Stomach (tissue), 19 donors: ENCODE measurements at regions of chr6 and their contacts with region 1.

Region 1: GRCh38 chr6:34680802-34681515 is 15.6 kb downstream of the ILRUN start:
- DNase-seq: no peak
- H3K4me3 ChIP-seq: no peak overlapping the region
- H3K27ac ChIP-seq: peak overlapping the region in 4 of 5 donors; percentile 31 to 55 (median 42)
- H3K4me1 ChIP-seq: peaks cover 5 to 40% (median 27%) of the 10 kb centered on the region in 4 donors
- H3K27me3 ChIP-seq: no peaks in the 10 kb centered on the region
- CTCF ChIP-seq: no peak
- EP300 ChIP-seq: no peak
- POLR2A ChIP-seq: no peak

Region 2: DNA sequence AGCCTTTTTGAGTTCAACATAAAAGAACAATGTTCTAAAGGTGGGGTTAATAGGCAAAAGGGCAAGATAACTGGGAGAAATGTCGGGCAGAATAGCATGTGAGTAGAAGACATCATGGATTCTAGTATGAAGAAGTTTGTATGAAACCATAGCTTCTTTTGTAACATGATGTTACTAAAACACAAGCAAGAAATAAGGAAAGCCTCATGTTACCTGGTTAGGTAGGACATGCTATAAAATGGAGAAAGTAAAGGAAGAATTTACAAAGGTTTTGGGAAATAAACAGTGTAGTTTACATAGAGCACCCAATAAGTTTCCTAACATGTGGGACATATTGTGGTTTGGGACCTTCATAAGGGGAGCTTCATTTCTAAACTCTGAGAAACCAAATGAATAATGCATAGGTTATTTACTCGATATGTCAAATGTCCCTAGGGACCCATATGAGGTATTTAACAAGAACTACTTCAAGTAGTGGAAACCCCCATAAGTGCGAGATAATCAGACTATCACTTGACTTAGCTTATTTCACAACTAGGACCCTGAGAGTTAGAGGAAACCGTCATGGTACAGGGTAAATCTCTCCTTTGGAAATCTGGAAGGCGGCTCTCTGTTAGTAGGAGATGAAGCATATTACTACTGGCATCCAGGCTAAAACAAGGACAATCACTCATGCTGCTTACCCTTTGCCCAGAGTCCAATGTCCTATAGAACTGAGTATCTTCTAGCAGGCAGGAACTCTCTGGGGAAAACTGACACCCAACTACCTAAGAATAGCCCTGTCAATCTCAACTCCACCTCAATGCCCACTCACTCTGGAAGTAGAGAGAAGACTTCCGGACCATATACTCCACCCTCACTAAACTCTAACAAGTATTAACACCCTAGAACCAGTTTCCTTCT is 41.9 kb before region 1 on chr6:
- intact Hi-C with region 1: no loop called
- DNase-seq: peak in 1 of 2 donors; percentile 30
- H3K4me3 ChIP-seq: no peak overlapping the region
- H3K27ac ChIP-seq: no peak overlapping the region
- H3K4me1 ChIP-seq: peaks cover 0 to 6% (median 0%) of the 10 kb centered on the region in 4 donors
- H3K27me3 ChIP-seq: no peaks in the 10 kb centered on the region
- CTCF ChIP-seq: no peak
- EP300 ChIP-seq: no peak
- POLR2A ChIP-seq: no peak

Region 3: GRCh38 chr6:34760108-34760507 is 79.1 kb after region 1 on chr6:
- intact Hi-C with region 1: loop called (anchors 10 kb)
- DNase-seq: no peak
- H3K4me3 ChIP-seq: no peak overlapping the region
- H3K27ac ChIP-seq: no peak overlapping the region
- H3K4me1 ChIP-seq: peaks cover 13 to 40% (median 25%) of the 10 kb centered on the region in 4 donors
- H3K27me3 ChIP-seq: no peaks in the 10 kb centered on the region
- CTCF ChIP-seq: no peak
- EP300 ChIP-seq: no peak
- POLR2A ChIP-seq: no peak